AG04450 (cell line): ENCODE measurements at regions of chr3 and their contacts with region 1.

Region 1: DNA sequence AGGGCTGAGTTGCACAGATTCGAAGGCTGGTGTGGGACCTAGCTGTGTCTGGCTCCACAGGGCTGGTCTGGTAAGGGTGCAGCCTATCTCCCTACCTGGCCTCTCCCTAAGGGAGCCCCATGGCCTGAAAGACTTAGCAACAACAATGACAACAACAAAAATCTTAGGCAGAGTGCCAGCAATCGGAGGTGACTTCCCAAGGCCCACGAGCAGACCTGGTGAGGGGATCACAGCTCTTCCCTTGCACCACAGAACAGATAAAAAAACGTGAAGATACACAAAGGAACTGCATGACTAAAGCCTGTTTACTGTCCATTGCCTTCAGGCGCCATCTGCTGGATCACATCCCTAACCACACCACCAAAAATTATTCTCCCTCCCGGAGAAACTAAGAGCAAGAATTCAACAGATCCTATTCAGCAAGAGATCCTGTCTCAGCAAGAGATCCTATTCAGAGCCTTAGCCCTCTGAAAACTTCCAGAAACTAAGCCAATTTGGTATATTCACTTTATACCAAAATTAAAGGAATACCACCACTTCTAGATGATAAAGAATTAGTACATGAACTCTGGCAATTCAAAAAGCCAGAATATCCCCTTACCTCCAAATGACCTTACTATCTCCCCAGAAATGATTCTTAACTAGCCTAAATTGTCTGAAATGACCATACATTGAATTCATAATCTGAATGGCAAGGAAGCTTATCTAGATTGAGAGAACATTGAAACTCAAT is 24.1 kb upstream of the OR5K4 start:
- DNase-seq: peak; percentile 6
- H3K4me3 ChIP-seq: no peak overlapping the region
- H3K27ac ChIP-seq: no peak overlapping the region
- H3K27me3 ChIP-seq: no peaks in the 10 kb centered on the region
- CTCF ChIP-seq: peak; percentile 85

Region 2: DNA sequence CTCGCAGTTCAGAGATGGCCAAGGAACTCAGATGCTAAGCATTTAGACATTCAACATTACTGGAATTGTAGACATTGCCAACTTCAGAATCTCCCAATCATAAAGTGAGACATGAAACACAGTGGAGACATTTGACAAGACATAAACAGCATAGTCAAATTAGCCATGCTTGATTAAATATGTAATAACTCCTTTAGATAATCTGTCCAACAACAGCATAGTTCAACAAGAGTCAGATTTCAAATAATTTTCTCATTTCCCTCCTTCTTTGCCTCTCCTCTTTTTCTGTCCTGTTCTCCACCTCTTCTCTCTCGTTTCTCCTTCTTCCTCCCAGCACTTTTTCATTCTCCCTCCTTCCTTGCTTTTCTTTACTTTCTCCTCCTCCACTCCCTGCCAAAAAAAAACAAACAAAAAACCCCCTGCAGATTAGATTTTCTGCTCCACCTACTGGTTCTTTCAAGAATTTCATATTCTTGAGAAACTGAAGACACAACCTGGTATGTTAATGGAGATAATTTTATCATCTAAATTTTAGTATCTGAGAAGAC is 243.7 kb after region 1 on chr3:
- CTCF ChIA-PET with region 1: interaction called, 11 read pairs
- POLR2A ChIA-PET with region 1: no interaction called
- DNase-seq: no peak
- H3K4me3 ChIP-seq: no peak overlapping the region
- H3K27ac ChIP-seq: no peak overlapping the region
- H3K27me3 ChIP-seq: no peaks in the 10 kb centered on the region
- CTCF ChIP-seq: peak; percentile 62

Region 3: DNA sequence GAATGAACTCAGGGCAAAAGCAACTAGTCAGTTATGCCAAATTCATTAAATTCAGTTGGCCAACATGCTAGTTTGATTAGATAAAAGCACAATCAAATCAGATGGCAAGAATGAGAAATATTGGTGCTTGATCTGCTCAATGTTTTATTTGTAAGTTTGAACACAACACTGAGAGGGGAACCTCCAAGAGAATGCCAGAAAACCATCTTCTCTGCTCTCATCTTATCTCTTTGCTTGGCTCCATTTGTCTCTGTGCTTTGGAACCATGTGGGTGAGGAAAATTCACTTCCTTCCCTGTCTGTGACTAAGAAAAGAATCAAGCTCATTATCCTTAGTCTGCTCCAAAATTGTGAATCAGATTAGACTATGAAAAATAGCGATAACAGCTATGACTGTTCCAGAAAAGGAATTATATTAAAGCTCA is 615.6 kb after region 1 on chr3:
- CTCF ChIA-PET with region 1: no interaction called
- POLR2A ChIA-PET with region 1: no interaction called
- DNase-seq: no peak
- H3K4me3 ChIP-seq: no peak overlapping the region
- H3K27ac ChIP-seq: no peak overlapping the region
- H3K27me3 ChIP-seq: no peaks in the 10 kb centered on the region
- CTCF ChIP-seq: no peak